ENCODE measurements at regions of chr9 and their contacts with region 1.

Region 1: GRCh38 chr9:137823986-137824771 is 53.4 kb upstream of the CACNA1B start:
- DNase-seq: no peak

Region 2: GRCh38 chr9:137590462-137591383 is 233.5 kb before region 1 on chr9 and contains the start of gene ZMYND19:
- intact Hi-C with region 1: no loop called
- DNase-seq: peak; percentile 96
- total RNA-seq, gene ZMYND19: 9.1 to 11.0 TPM

Region 3: DNA sequence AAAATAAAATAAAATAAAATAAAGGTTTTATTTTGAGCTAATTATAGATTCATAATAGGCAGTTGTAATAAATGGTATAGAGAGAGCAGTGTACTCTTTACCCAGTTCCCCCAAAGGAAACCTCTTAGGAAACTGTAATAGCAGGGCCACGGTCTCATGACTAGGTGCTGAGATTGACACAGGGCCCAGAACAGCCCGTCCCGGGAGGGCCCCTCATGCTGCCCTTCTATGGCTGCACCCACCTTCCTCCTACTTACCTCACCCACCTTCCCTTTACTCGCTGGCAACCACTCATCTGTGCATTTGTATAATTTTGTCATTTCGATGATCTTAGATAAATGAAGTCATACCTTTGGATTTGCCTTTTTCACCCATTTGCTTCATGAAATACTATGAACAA is 69.5 kb after region 1 on chr9:
- intact Hi-C with region 1: loop called in 1 of 2 experiments (anchors 2 kb)
- DNase-seq: no peak

Region 4: GRCh38 chr9:138009788-138010690 is 185.9 kb after region 1 on chr9:
- intact Hi-C with region 1: no loop called
- DNase-seq: peak; percentile 64

Measured in posterior vena cava (tissue), 2 donors.